ENCODE measurements at regions of chr17 and their contacts with region 1.

Region 1: DNA sequence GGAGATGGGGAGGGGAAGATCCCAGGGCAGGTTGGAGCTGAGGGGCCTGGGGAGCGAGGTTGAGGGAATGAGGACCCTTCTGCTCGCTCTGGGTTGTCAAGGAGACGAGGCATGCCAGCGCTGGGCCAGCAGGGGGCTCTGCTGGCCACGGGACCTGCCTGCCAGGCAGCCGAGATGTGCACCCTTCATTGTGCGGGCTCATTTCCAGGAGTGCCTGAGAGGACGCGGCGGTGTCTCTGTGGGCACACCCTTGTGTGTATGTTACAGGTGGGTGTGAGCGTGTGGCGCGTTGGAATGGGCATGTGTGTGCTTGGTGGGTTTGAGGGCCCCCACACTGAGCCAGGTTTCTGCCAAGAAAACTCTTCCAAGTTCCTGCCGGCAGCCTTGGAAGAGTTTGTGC is 15.9 kb downstream of the ARHGAP23 start:
- DNase-seq: peak; percentile 40
- ATAC-seq: peak; percentile 87
- H3K4me3 Mint-ChIP-seq: no peak overlapping the region
- H3K27ac Mint-ChIP-seq: no peak overlapping the region
- H3K4me1 Mint-ChIP-seq: no peaks in the 10 kb centered on the region
- H3K27me3 Mint-ChIP-seq: peaks cover 4% of the 10 kb centered on the region
- CTCF ChIP-seq: no peak

Region 2: DNA sequence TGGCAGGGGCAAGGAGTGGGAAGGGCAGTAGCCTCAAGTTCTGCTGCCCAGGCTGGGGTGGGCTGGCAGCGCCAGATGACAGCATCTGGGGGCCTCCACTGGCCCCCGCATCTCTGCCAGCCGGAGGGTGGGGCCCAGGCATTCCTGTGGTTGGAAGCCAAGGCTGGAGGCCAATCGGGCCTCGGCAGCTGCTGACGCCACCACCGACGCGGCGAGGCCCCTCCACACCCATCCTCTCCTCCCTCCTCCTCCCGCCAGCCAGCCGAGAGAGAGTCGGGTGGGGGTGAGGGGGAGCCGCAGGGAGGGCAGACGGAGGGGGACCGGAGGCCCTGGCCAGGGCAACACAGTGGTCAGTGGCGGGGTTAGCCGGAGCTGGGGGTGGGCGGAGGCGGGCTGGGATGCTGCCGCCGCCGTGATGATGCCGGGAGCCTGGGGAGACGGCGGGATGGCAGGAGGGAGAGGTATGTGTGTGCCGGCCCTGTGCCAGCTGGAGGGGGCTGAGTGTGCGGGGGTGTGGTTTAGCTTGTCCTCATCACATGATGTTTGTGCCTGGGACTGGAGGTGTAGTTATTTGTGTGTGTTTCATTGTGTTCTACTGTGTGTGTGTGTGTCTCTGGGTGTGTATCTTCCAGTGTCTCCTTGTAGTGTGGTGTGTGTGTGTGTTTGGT is 20.7 kb after region 1 on chr17:
- CTCF ChIA-PET with region 1: no interaction called
- POLR2A ChIA-PET with region 1: no interaction called
- intact Hi-C with region 1: no loop called
- DNase-seq: no peak
- ATAC-seq: no peak
- H3K4me3 Mint-ChIP-seq: no peak overlapping the region
- H3K27ac Mint-ChIP-seq: no peak overlapping the region
- H3K4me1 Mint-ChIP-seq: no peaks in the 10 kb centered on the region
- H3K27me3 Mint-ChIP-seq: peaks cover 8% of the 10 kb centered on the region
- CTCF ChIP-seq: no peak

Region 3: DNA sequence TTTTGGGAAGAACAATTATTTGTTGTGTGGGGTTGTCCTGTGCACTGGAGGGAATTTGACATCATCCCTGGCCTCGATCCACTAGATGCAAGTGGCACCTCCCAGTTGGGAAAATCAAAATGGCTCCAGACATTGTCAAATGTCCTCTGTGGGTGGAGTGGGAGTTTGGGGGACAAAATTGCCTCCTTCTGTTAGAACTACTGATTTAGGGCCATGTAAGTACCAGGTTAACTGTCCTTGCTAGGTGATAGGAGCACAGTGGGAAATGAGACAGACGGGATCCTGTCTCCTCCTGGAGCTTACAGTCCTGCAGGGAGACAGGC is 41.0 kb after region 1 on chr17:
- CTCF ChIA-PET with region 1: interaction called, 3 read pairs
- POLR2A ChIA-PET with region 1: no interaction called
- intact Hi-C with region 1: loop called (anchors 1 kb)
- DNase-seq: no peak
- ATAC-seq: no peak
- H3K4me3 Mint-ChIP-seq: peak overlapping the region; percentile 73
- H3K27ac Mint-ChIP-seq: peak overlapping the region; percentile 74
- H3K4me1 Mint-ChIP-seq: peaks cover 15% of the 10 kb centered on the region
- H3K27me3 Mint-ChIP-seq: peaks cover 1% of the 10 kb centered on the region
- CTCF ChIP-seq: no peak

Region 4: DNA sequence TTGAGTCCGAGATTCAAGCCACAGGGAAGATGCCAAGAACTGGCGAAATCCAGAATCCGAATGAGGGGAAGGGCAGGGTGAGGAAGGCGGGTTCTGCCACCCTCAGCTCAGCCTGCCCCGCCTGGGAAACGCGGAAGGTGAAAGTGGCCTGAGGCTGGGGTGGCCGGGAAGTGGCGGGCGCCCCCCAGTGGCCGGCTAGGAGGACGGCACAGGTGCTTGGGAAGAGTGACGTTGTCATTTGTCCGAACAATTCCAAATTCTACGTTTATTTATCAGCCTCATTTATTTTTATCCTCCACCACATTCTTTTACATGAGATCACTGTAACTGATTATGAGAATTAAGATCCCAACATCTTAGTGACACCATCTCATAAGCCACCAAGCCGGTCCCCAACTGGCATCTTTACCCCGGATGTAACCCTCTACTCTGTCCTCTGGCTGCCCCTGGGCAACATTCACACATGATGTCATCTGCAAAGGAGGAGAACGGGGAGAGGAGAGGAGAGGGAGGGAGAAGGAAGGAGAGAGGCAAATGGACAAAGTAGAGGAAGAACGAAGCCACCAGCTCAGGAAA is 140.3 kb after region 1 on chr17:
- CTCF ChIA-PET with region 1: no interaction called
- POLR2A ChIA-PET with region 1: no interaction called
- intact Hi-C with region 1: loop called (anchors 1 kb)
- DNase-seq: peak; percentile 57
- ATAC-seq: peak; percentile 92
- H3K4me3 Mint-ChIP-seq: no peak overlapping the region
- H3K27ac Mint-ChIP-seq: no peak overlapping the region
- H3K4me1 Mint-ChIP-seq: peaks cover 7% of the 10 kb centered on the region
- H3K27me3 Mint-ChIP-seq: peaks cover 62% of the 10 kb centered on the region
- CTCF ChIP-seq: peak; percentile 94

Measured in activated B cell treated with CpG ODN at 0.5 μM for 24 hours (primary cell).